ENCODE measurements at regions of chr9 and their contacts with region 1.

Region 1: DNA sequence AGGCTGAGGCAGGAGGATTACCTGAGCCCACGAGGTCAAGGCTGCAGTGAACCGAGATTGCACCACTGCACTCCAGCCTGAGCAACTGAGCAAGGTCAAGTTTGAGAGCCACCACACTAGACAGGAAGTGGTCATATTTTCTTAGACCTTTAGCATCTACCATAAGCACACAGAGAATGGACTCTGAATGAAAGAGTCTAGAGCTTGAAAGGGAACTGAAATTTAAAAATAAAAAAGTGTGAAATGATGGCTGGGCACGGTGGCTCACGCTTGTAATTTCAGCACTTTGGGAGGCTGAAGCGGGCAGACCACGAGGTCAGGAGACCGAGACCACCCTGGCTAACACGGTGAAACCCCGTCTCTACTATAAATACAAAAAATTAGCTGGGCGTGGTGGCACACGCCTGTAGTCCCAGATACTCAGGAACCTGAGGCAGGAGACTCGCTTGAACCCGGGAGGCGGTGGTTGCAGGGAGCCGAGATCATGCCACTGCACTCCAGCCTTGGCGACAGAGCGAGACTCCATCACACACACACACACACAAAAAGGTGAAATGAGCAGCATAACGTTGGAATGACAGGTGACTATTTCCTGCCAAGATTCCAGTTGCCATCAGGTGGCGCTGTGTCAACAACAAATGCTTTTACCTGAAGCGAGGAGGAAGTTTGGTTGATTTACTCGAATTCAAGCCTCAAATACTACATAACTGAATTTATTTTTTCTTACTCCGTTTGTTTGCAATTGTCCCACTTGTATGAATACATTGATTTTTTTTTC is 21.3 kb upstream of the AK3 start:
- DNase-seq: peak; percentile 78
- ATAC-seq: peak; percentile 81
- H3K4me3 ChIP-seq: no peak overlapping the region
- H3K27ac ChIP-seq: no peak overlapping the region
- H3K4me1 ChIP-seq: peaks cover 0 to 13% of the 10 kb centered on the region in 2 experiments; a peak in 2 of 4 replicates
- H3K27me3 ChIP-seq: no peaks in the 10 kb centered on the region
- CTCF ChIP-seq: peak; percentile 82 to 89 (median 83)
- POLR2A ChIP-seq: no peak
- RAD21 ChIP-seq: peak; percentile 94

Region 2: GRCh38 chr9:4923580-4924544 is 161.6 kb after region 1 on chr9:
- CTCF ChIA-PET with region 1: no interaction called
- POLR2A ChIA-PET with region 1: no interaction called
- RAD21 ChIA-PET with region 1: no interaction called
- intact Hi-C with region 1: loop called (anchors 1 kb)
- DNase-seq: no peak
- ATAC-seq: peak; percentile 50; the same call in 1 of the 2 replicates
- H3K4me3 ChIP-seq: no peak overlapping the region
- H3K27ac ChIP-seq: no peak overlapping the region
- H3K4me1 ChIP-seq: no peaks in the 10 kb centered on the region
- H3K27me3 ChIP-seq: no peaks in the 10 kb centered on the region
- CTCF ChIP-seq: peak; percentile 37 to 93 (median 53); a peak in 5 of 6 replicates
- POLR2A ChIP-seq: no peak
- RAD21 ChIP-seq: peak; percentile 64

Region 3: GRCh38 chr9:4967523-4967922 is 205.2 kb after region 1 on chr9:
- CTCF ChIA-PET with region 1: no interaction called
- POLR2A ChIA-PET with region 1: no interaction called
- RAD21 ChIA-PET with region 1: no interaction called
- intact Hi-C with region 1: no loop called
- DNase-seq: no peak
- ATAC-seq: no peak
- H3K4me3 ChIP-seq: no peak overlapping the region
- H3K27ac ChIP-seq: no peak overlapping the region
- H3K4me1 ChIP-seq: no peaks in the 10 kb centered on the region
- H3K27me3 ChIP-seq: no peaks in the 10 kb centered on the region
- CTCF ChIP-seq: no peak
- POLR2A ChIP-seq: no peak
- RAD21 ChIP-seq: no peak

Region 4: DNA sequence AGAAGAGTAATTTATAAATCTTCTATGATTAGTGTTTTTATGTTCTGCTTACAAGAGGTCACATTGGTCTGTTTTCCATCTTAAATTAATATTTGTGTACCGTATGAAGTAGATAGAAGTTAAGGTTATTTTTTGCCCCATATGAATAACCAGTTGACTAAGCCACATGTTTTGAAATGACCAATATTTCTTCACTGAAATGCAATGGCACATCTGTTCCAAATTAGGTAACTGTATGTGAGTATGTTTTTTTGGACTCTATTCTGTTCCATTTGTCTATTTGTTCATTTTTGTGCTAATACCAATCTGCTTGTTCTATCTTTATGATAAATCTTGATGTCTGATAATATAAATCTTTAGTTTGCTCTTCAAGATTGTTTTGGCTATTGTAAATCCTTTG is 240.5 kb after region 1 on chr9:
- CTCF ChIA-PET with region 1: no interaction called
- POLR2A ChIA-PET with region 1: no interaction called
- RAD21 ChIA-PET with region 1: no interaction called
- intact Hi-C with region 1: no loop called
- DNase-seq: no peak
- ATAC-seq: no peak
- H3K4me3 ChIP-seq: no peak overlapping the region
- H3K27ac ChIP-seq: no peak overlapping the region
- H3K4me1 ChIP-seq: no peaks in the 10 kb centered on the region
- H3K27me3 ChIP-seq: no peaks in the 10 kb centered on the region
- CTCF ChIP-seq: no peak
- POLR2A ChIP-seq: no peak
- RAD21 ChIP-seq: no peak

Region 5: GRCh38 chr9:5326893-5327548 is 564.7 kb after region 1 on chr9:
- CTCF ChIA-PET with region 1: no interaction called
- POLR2A ChIA-PET with region 1: no interaction called
- RAD21 ChIA-PET with region 1: no interaction called
- intact Hi-C with region 1: no loop called
- DNase-seq: no peak
- ATAC-seq: no peak
- H3K4me3 ChIP-seq: no peak overlapping the region
- H3K27ac ChIP-seq: no peak overlapping the region
- H3K4me1 ChIP-seq: no peaks in the 10 kb centered on the region
- H3K27me3 ChIP-seq: no peaks in the 10 kb centered on the region
- CTCF ChIP-seq: no peak
- POLR2A ChIP-seq: no peak
- RAD21 ChIP-seq: no peak

Region 6: DNA sequence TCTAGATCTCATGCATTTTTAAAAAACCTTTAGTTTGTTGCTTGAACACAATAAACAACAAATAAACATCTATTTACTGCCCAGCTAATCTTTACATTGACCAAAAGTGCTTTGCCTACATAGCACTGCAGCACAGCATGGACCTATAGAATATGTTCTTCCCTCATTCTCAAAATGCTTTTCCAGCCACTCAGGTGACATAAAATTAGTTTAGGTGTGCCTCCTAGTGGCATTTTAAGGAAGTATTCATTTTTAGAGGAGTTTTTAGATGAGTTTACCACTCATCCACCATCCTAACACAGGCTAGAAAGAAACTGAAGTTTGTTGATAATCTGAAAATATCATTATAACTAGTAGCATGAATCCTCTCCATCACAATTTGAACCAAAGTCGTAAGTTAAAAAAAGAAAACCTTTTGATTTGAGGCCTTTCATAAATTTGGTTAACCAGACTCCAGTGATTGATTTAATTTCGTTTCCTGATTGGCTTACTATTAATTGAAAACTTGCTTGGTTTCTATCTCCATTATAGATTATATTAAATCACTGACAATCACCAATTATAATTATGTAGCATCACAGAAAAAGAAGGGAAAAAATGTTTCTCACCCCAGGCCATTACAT is 662.8 kb after region 1 on chr9:
- CTCF ChIA-PET with region 1: interaction called, 4 read pairs
- POLR2A ChIA-PET with region 1: no interaction called
- RAD21 ChIA-PET with region 1: no interaction called
- intact Hi-C with region 1: loop called (anchors 5 kb)
- DNase-seq: no peak
- ATAC-seq: peak; percentile 82
- H3K4me3 ChIP-seq: no peak overlapping the region
- H3K27ac ChIP-seq: no peak overlapping the region
- H3K4me1 ChIP-seq: no peaks in the 10 kb centered on the region
- H3K27me3 ChIP-seq: no peaks in the 10 kb centered on the region
- CTCF ChIP-seq: peak; percentile 40 to 71 (median 69); a peak in 5 of 6 replicates
- POLR2A ChIP-seq: no peak
- RAD21 ChIP-seq: peak; percentile 72

Region 7: GRCh38 chr9:5586391-5586802 is 824.1 kb after region 1 on chr9:
- CTCF ChIA-PET with region 1: interaction called, 4 read pairs
- POLR2A ChIA-PET with region 1: no interaction called
- RAD21 ChIA-PET with region 1: no interaction called
- intact Hi-C with region 1: loop called (anchors 2 kb)
- DNase-seq: no peak
- ATAC-seq: no peak
- H3K4me3 ChIP-seq: no peak overlapping the region
- H3K27ac ChIP-seq: no peak overlapping the region
- H3K4me1 ChIP-seq: no peaks in the 10 kb centered on the region
- H3K27me3 ChIP-seq: no peaks in the 10 kb centered on the region
- CTCF ChIP-seq: no peak
- POLR2A ChIP-seq: no peak
- RAD21 ChIP-seq: no peak